ENCODE measurements at regions of chr20 and their contacts with region 1.

Region 1: DNA sequence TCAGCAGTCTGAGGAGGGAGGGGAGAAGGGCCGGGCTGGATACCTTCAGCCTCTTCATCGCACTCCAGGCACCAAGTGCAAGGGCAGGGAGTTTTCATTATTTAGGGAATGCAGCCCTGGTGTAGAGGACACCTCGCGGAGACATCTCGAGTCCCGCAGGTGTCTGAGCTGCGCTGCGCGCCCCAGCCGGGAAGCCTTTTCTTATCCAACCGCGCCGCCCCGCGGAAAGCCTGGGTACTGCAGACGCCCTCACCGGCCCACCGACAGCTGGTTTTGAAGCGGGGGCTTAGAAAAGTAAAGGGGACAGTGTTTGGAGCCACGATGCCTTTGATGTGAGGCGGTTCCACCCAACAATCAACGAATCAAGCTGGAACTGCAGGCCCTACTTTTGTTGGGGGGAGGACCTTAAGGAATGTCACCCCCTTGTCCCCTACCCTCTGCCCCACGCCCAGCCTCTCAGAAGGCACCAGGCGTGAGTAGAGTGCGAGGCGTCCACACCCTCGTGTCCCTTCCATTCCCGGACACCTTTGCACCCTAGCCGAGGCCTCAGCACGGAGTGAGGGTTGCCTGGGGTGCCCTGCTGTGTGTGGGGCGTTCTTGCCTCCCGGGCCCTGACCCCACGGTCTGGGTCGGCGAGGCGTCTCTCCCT is 8.6 kb downstream of the NKX2-2 start:
- DNase-seq: peak; percentile 87
- H3K4me3 ChIP-seq: peak overlapping the region; percentile 36 to 56
- H3K27ac ChIP-seq: no peak overlapping the region
- H3K4me1 ChIP-seq: peaks cover 17% of the 10 kb centered on the region
- H3K27me3 ChIP-seq: no peaks in the 10 kb centered on the region
- CTCF ChIP-seq: peak; percentile 83 to 96 (median 96)
- POLR2A ChIP-seq: no peak

Region 2: DNA sequence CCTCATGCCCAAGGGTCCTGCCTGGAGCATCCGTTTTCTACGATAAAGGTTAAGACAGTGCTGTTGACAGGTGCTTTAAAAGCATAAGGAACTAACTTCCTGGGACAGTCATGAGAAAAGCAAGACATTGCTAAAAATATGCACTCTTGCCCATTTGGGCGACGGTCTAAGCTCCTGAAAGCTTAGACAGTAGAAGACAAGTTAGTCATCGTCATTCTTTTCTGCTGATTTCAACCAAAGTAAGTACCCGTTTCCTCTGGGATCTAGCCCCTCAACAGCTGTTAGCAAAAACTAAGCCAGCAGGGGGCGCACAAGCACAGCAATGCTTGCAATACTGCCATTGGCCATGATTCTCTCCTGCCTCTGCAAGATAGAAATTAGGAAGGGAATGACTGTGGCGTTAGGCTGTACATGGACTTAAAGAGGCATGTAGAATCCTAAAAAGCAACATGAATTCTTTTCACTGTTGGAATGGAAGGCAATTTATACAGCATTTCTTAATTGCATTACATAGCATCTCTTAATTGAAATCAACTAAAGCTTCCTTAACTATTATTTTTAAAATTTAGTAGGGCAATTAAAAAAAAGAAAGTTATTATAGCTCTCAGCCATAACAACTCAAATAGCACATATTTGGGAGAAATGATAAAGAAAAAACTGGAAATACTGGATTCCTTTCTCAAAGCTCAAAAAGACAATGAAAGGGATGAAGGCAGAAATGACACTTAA is 645.0 kb before region 1 on chr20:
- intact Hi-C with region 1: loop called (anchors 10 kb)
- DNase-seq: peak; percentile 95
- H3K4me3 ChIP-seq: no peak overlapping the region
- H3K27ac ChIP-seq: no peak overlapping the region
- H3K4me1 ChIP-seq: no peaks in the 10 kb centered on the region
- H3K27me3 ChIP-seq: no peaks in the 10 kb centered on the region
- CTCF ChIP-seq: peak; percentile 88 to 95 (median 91)
- POLR2A ChIP-seq: no peak

Region 3: DNA sequence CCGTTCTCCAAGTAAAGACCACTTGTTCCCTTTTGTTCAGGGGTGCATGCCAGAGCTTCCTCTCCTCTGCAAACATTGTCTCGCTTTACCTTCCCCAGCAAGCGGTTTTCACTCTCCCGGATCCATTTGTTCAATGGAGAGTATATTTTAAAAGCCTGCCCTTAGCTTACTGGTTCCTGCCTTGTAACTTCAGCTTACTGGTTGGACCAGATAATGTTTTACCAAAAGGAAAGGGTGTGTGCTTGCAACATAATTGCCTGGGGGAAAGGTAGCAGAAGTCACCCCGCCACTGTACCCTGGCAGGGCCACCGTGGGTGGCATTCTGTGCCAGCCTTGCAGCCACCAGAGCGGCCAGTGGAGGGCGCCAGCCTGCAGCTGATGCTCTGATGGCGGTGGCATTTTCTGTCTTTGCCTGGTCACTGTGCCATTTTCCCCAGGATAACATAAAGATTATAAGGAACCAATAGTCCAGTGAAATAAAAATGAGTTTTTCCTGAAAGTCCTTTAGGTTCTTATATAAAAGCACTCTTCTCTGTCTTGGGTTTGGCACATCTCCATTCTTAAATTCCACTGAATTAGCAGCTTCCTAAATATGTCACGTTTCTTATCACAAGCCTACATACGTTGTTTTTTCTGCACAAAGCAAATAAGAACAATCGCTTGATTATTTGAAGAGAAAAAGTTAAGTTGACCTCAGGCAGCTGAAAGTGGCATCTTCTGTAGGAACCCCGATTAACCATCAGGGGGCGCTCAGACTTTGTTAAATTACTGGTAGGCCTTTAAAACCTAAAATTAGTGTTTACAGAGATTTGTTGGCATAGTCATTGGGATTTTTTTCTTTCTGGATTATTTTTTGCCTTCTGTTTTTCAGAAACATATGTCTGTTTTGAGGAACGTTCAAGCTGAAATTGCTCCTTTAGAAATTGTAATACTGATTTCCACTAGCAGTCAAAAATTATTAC is 269.5 kb before region 1 on chr20:
- intact Hi-C with region 1: loop called (anchors 2 kb)
- DNase-seq: peak; percentile 75
- H3K4me3 ChIP-seq: no peak overlapping the region
- H3K27ac ChIP-seq: no peak overlapping the region
- H3K4me1 ChIP-seq: peaks cover 9% of the 10 kb centered on the region
- H3K27me3 ChIP-seq: no peaks in the 10 kb centered on the region
- CTCF ChIP-seq: peak; percentile 55 to 78 (median 65)
- POLR2A ChIP-seq: no peak

Region 4: DNA sequence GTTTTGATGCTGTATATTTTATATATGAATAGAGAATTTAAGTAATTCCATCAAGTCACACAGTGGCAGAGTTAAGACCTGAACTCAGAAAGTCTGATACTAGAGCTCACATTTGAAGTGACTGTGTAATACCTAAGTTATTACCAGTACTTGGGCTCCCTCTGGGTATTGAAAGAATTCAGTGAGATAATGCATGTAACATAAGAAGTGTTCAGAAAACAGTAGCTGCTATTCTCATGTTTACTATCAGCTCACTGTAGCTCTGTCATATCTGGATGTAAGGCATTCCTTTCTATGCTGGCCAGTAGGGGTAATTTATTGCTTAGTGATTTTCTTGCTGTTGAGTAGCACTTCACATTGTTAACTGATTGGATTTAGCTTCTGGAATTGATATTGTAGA is 152.6 kb before region 1 on chr20:
- intact Hi-C with region 1: no loop called
- DNase-seq: no peak
- H3K4me3 ChIP-seq: no peak overlapping the region
- H3K27ac ChIP-seq: no peak overlapping the region
- H3K4me1 ChIP-seq: no peaks in the 10 kb centered on the region
- H3K27me3 ChIP-seq: no peaks in the 10 kb centered on the region
- CTCF ChIP-seq: no peak
- POLR2A ChIP-seq: no peak

Region 5: GRCh38 chr20:21577551-21577950 is 72.3 kb after region 1 on chr20:
- intact Hi-C with region 1: no loop called
- DNase-seq: no peak
- H3K4me3 ChIP-seq: no peak overlapping the region
- H3K27ac ChIP-seq: no peak overlapping the region
- H3K4me1 ChIP-seq: no peaks in the 10 kb centered on the region
- H3K27me3 ChIP-seq: no peaks in the 10 kb centered on the region
- CTCF ChIP-seq: no peak
- POLR2A ChIP-seq: no peak

Measured in testis (tissue), 5 donors.